PC-3 (cell line): ENCODE measurements at regions of chr15 and their contacts with region 1.

Region 1: DNA sequence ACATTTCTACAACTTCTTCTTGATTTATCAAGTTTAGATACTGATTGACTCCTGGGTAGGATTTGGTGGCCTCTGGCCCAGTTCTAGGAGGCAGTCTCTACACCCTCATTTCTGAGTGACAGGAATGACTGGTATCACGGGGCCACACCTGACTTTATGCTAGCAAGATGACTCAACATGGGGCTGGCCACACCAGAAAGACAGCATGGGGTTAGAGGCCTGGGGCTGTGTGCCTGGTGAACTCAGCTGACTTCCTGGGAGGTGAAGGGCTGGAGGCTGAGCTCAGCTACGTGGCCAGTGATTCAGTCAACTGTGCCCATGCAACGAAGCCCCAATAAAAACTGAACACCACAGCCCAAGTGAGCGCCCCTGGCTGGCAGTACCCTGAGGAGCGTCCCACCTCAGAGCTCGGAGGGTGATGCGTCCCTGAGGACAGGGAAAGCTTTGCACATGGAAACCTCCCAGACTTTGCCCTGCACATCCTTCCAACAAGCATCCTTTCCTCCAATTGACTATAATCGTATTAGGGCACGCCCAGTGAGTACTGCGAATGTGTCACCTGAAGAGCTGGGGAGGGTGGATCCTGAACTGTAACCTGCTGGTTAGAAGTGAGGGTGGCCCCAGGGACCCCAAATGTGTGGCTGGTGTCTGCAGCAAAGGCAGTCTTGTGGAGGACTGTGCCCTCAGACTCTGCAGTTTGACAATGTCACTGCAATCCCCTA is 57.2 kb downstream of the NIPA2 start:
- DNase-seq: peak; percentile 98
- ATAC-seq: peak; percentile 99
- H3K4me3 ChIP-seq: peak overlapping the region; percentile 30; the same call in 1 of the 2 replicates
- H3K27ac ChIP-seq: peak overlapping the region; percentile 84
- H3K4me1 ChIP-seq: peaks cover 18% of the 10 kb centered on the region
- H3K27me3 ChIP-seq: no peaks in the 10 kb centered on the region
- CTCF ChIP-seq: peak; percentile 48

Region 2: GRCh38 chr15:22838292-22839042 is 57.2 kb before region 1 on chr15 and contains the start of gene NIPA2:
- CTCF ChIA-PET with region 1: no interaction called
- POLR2A ChIA-PET with region 1: no interaction called
- intact Hi-C with region 1: loop called (anchors 2 kb)
- DNase-seq: peak; percentile 99
- ATAC-seq: peak; percentile 94
- H3K4me3 ChIP-seq: peak within 1 kb of the TSS; percentile 91
- H3K27ac ChIP-seq: peak within 1 kb of the TSS; percentile 85
- H3K4me1 ChIP-seq: peaks cover 9% of the 10 kb centered on the region
- H3K27me3 ChIP-seq: no peaks in the 10 kb centered on the region
- CTCF ChIP-seq: no peak
- total RNA-seq, gene NIPA2: 108 and 115 TPM in 2 replicates

Region 3: GRCh38 chr15:22936577-22937472 is 41.2 kb after region 1 on chr15:
- CTCF ChIA-PET with region 1: no interaction called
- POLR2A ChIA-PET with region 1: no interaction called
- intact Hi-C with region 1: loop called (anchors 2 kb)
- DNase-seq: no peak
- ATAC-seq: no peak
- H3K4me3 ChIP-seq: no peak overlapping the region
- H3K27ac ChIP-seq: no peak overlapping the region
- H3K4me1 ChIP-seq: peaks cover 9% of the 10 kb centered on the region
- H3K27me3 ChIP-seq: no peaks in the 10 kb centered on the region
- CTCF ChIP-seq: no peak

Region 4: GRCh38 chr15:22980189-22981050 is 84.8 kb after region 1 on chr15 and contains the start of gene CYFIP1:
- CTCF ChIA-PET with region 1: no interaction called
- POLR2A ChIA-PET with region 1: no interaction called
- intact Hi-C with region 1: loop called (anchors 1 kb)
- DNase-seq: peak; percentile 91
- ATAC-seq: peak; percentile 82
- H3K4me3 ChIP-seq: peak within 1 kb of the TSS; percentile 86
- H3K27ac ChIP-seq: peak within 1 kb of the TSS; percentile 53
- H3K4me1 ChIP-seq: peaks cover 9% of the 10 kb centered on the region; the same call in 1 of the 2 replicates
- H3K27me3 ChIP-seq: no peaks in the 10 kb centered on the region
- CTCF ChIP-seq: no peak
- total RNA-seq, gene CYFIP1: 80.3 and 85.4 TPM in 2 replicates

Region 5: DNA sequence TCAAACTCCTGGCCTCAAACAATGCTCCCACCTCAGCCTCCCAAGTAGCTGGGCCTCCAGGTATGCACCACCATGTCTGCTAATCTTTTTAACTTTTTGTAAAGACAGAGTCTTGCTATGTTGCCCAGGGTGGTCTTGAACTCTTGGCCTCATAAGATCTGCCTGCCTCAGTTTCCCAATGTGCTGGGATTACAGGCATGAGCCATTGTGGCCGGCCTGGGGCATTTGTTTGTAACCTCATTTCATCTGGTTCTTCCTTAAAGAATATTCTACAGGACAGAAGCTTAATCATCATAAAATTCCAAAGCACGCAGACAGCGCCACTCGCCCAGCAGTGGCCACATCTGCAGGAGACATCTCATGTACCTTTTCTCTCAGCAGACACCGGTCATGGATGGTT is 108.1 kb after region 1 on chr15:
- CTCF ChIA-PET with region 1: no interaction called
- POLR2A ChIA-PET with region 1: no interaction called
- intact Hi-C with region 1: no loop called
- DNase-seq: no peak
- ATAC-seq: no peak
- H3K4me3 ChIP-seq: no peak overlapping the region
- H3K27ac ChIP-seq: no peak overlapping the region
- H3K4me1 ChIP-seq: no peaks in the 10 kb centered on the region
- H3K27me3 ChIP-seq: no peaks in the 10 kb centered on the region
- CTCF ChIP-seq: 0 out of 2 replicates have a peak, but pooled peaks have one; percentile 18

Region 6: DNA sequence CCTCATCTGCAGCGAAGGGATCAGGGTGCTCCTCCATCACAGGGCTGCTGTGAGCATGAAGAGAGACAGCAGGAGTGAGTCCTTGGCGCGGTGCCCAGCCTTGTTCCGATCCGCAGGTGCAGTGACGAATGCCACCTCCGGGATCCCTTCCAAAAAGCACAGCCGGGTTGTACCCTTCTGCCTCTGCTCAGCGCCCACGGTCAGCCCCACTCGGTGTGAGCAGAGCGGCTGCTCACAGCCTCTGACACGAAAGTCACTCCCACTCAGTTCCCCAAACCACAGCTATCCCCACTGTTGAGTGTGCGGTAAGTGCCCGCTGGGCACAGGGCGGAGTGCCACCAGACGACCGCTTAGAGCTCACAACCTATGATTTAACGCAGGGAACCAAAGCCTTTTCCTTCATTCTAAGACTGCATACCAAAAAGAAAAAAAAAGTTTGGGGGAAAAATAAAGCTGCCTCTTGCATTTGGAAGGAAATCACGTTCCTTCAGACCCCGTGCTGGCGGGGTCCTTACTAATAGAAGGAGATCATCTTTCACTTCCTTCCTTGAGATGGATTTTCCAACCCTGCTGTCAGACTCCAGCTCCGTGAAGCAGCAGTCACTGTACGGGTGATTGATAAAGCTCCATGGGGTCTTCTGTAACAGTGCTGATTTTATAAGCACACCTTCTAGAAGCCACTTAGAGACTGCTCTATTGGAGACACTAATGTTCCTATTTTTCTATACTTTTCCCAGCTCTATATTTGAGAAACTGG is 178.4 kb after region 1 on chr15:
- CTCF ChIA-PET with region 1: no interaction called
- POLR2A ChIA-PET with region 1: no interaction called
- intact Hi-C with region 1: loop called (anchors 10 kb)
- DNase-seq: peak; percentile 57
- ATAC-seq: peak; percentile 60
- H3K4me3 ChIP-seq: no peak overlapping the region; the same call in 1 of the 2 replicates
- H3K27ac ChIP-seq: no peak overlapping the region
- H3K4me1 ChIP-seq: no peaks in the 10 kb centered on the region
- H3K27me3 ChIP-seq: peaks cover 28% of the 10 kb centered on the region
- CTCF ChIP-seq: no peak